ENCODE measurements at regions of chr2 and their contacts with region 1.

Region 1: DNA sequence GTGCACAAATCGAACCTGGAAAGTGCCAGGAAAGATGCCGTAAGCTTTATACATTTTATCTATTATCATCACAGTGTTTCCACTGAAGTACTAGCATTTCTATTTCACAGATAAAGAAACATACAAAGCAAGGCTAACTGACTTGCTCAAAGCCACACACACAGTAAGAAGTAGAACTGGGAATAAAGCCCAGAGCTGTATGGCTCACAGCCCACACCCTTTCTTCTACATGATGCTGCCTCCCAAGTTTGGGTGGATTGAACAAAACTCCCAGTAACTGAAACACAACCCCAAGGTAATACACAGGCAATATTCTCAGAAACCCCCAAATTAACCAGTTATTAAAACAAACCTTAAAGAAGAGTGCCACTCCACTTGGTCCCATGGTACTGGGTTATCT is 11.2 kb downstream of the SAP130 start:
- DNase-seq: no peak
- ATAC-seq: no peak

Region 2: DNA sequence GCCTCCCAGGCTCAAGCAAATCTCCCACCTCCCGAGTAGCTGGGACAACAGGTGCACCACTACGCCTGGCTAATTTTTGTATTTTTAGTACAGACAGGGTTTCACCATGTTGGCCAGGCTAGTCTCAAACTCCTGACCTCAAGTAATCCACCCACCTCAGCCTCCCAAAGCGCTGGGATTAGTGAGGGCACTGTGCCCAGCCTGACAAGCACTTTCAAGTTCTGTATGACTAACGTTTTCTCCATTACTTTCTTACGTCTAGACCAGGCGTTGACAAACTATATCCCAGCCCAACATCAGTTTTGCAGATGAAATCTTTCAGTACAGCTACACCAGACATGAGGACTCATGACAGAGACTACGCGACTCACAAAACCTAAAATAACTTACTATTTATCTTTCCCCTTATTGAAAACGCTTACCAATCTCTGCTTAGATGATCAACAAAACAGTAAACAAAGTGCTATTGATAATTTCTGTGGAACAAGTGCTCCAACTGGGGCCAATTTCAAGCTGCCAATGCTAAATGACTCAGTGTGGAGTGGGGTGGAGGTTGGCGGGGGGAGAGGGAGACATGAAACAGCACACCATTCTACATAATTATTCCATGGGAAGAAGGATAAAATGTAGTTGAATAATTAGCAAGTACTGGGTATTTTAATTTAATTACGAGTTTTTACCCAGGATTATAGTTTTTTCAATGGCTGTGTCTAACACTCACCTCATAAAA is 47.8 kb before region 1 on chr2:
- intact Hi-C with region 1: no loop called
- DNase-seq: no peak
- ATAC-seq: no peak

Region 3: GRCh38 chr2:128090945-128091725 is 74.5 kb after region 1 on chr2 and contains the start of gene UGGT1:
- intact Hi-C with region 1: no loop called
- DNase-seq: peak; percentile 97
- ATAC-seq: peak; percentile 100
- total RNA-seq, gene UGGT1: 24.3 TPM

Region 4: GRCh38 chr2:128115921-128116623 is 99.5 kb after region 1 on chr2:
- intact Hi-C with region 1: loop called (anchors 10 kb)
- DNase-seq: no peak
- ATAC-seq: no peak